Panc1 (cell line): ENCODE measurements at regions of chr2 and their contacts with region 1.

Region 1: GRCh38 chr2:120693121-120693520 is 42.5 kb upstream of the GLI2 start:
- DNase-seq: no peak
- ATAC-seq: no peak
- H3K4me3 ChIP-seq: no peak overlapping the region
- H3K27ac ChIP-seq: no peak overlapping the region
- H3K4me1 ChIP-seq: no peaks in the 10 kb centered on the region
- H3K27me3 ChIP-seq: no peaks in the 10 kb centered on the region; the same call in 1 of the 2 replicates
- CTCF ChIP-seq: no peak

Region 2: GRCh38 chr2:120934574-120935340 is 241.6 kb after region 1 on chr2:
- CTCF ChIA-PET with region 1: no interaction called
- POLR2A ChIA-PET with region 1: no interaction called
- in situ Hi-C with region 1: no loop called
- intact Hi-C with region 1: loop called (anchors 10 kb)
- DNase-seq: peak; percentile 76
- ATAC-seq: peak; percentile 73
- H3K4me3 ChIP-seq: no peak overlapping the region
- H3K27ac ChIP-seq: peak overlapping the region; percentile 21
- H3K4me1 ChIP-seq: peaks cover 44% of the 10 kb centered on the region
- H3K27me3 ChIP-seq: no peaks in the 10 kb centered on the region
- CTCF ChIP-seq: no peak

Region 3: GRCh38 chr2:121071034-121071504 is 377.9 kb after region 1 on chr2:
- CTCF ChIA-PET with region 1: interaction called, 8 read pairs
- POLR2A ChIA-PET with region 1: interaction called, 6 read pairs
- in situ Hi-C with region 1: no loop called
- intact Hi-C with region 1: loop called (anchors 1 kb)
- DNase-seq: no peak
- ATAC-seq: peak; percentile 69
- H3K4me3 ChIP-seq: no peak overlapping the region
- H3K27ac ChIP-seq: no peak overlapping the region
- H3K4me1 ChIP-seq: peaks cover 13% of the 10 kb centered on the region
- H3K27me3 ChIP-seq: no peaks in the 10 kb centered on the region
- CTCF ChIP-seq: peak; percentile 99

Region 4: GRCh38 chr2:121076885-121077549 is 383.9 kb after region 1 on chr2:
- CTCF ChIA-PET with region 1: interaction called, 15 read pairs
- POLR2A ChIA-PET with region 1: interaction called, 6 read pairs
- in situ Hi-C with region 1: no loop called
- intact Hi-C with region 1: loop called (anchors 1 kb)
- DNase-seq: no peak
- ATAC-seq: peak; percentile 59
- H3K4me3 ChIP-seq: no peak overlapping the region
- H3K27ac ChIP-seq: no peak overlapping the region
- H3K4me1 ChIP-seq: peaks cover 13% of the 10 kb centered on the region
- H3K27me3 ChIP-seq: no peaks in the 10 kb centered on the region
- CTCF ChIP-seq: peak; percentile 99